ENCODE measurements at regions of chr2 and their contacts with region 1.

Region 1: DNA sequence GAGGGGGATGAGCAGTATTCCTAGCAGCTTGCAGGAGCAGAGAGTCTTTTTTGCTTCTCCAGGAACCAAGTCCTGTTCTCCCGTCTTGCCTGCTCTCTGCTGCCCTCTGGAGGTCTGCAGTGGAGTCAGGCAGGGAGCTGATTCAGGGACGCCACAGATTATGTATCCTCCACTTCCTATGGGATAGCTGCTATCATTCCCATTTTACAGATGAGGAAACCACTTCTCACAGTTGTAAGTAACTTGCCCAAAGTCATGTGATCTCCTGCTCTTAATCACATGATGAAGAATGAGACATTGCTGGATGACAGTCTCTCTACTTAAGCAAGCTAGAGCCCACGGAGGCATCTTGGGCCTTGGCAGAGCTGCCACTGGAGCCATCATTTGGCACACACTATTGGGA is 8.3 kb downstream of the SLC4A5 start:
- DNase-seq: peak; percentile 61 to 80 (median 67)
- H3K4me3 ChIP-seq: no peak overlapping the region
- H3K4me3 Mint-ChIP-seq: no peak overlapping the region
- H3K27ac ChIP-seq: no peak overlapping the region
- H3K27ac Mint-ChIP-seq: no peak overlapping the region
- H3K4me1 ChIP-seq: peaks cover 9% of the 10 kb centered on the region
- H3K4me1 Mint-ChIP-seq: peaks cover 0 to 9% (median 5%) of the 10 kb centered on the region in 3 donors
- H3K27me3 ChIP-seq: no peaks in the 10 kb centered on the region
- H3K27me3 Mint-ChIP-seq: peaks cover 0 to 1% of the 10 kb centered on the region in 2 donors

Region 2: GRCh38 chr2:73828818-73829570 is 505.9 kb before region 1 on chr2 and contains the start of gene STAMBP:
- CTCF ChIA-PET with region 1: interaction called, 39 read pairs
- POLR2A ChIA-PET with region 1: no interaction called
- DNase-seq: peak; percentile 86 to 94 (median 90)
- H3K4me3 ChIP-seq: peak within 1 kb of the TSS; percentile 92
- H3K4me3 Mint-ChIP-seq: peak within 1 kb of the TSS; percentile 82 to 98 (median 96)
- H3K27ac ChIP-seq: peak within 1 kb of the TSS; percentile 93
- H3K27ac Mint-ChIP-seq: peak within 1 kb of the TSS; percentile 94 to 100 (median 99)
- H3K4me1 ChIP-seq: peaks cover 32% of the 10 kb centered on the region
- H3K4me1 Mint-ChIP-seq: peaks cover 46 to 61% (median 52%) of the 10 kb centered on the region in 3 donors
- H3K27me3 ChIP-seq: no peaks in the 10 kb centered on the region
- H3K27me3 Mint-ChIP-seq: no peaks in the 10 kb centered on the region
- total RNA-seq, gene STAMBP: 71.7 to 71.9 TPM

Region 3: DNA sequence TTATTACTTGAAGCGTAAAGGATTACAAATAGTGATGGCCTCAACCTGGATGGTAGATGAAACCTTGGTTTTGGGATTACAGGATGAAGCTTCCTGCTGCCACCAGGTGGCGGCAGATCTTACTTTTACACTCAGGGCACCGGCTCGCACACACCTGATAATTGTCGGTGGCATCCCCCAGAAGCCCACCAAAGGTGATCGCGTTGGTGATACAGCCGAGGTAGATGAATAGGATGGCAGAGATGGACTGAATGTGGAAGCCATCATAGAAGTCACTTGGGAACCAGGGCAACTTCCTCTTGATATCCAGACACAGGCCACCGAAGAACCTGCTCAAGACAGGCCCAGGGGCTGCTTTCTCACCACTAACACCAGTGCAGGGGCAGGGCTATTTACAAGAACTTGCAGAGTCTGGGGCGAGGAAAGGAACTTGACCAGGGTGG is 84.7 kb before region 1 on chr2:
- CTCF ChIA-PET with region 1: interaction called, 82 read pairs
- POLR2A ChIA-PET with region 1: no interaction called
- DNase-seq: peak; percentile 34 to 71 (median 43)
- H3K4me3 ChIP-seq: no peak overlapping the region
- H3K4me3 Mint-ChIP-seq: peak overlapping the region in 2 of 7 donors; percentile 2 to 44
- H3K27ac ChIP-seq: no peak overlapping the region
- H3K27ac Mint-ChIP-seq: peak overlapping the region in 2 of 8 donors; percentile 27 to 84
- H3K4me1 ChIP-seq: no peaks in the 10 kb centered on the region
- H3K4me1 Mint-ChIP-seq: peaks cover 2 to 4% (median 4%) of the 10 kb centered on the region in 3 donors
- H3K27me3 ChIP-seq: no peaks in the 10 kb centered on the region
- H3K27me3 Mint-ChIP-seq: peaks cover 0 to 3% of the 10 kb centered on the region in 2 donors

Region 4: GRCh38 chr2:74267068-74267467 is 67.9 kb before region 1 on chr2:
- CTCF ChIA-PET with region 1: interaction called, 26 read pairs
- POLR2A ChIA-PET with region 1: no interaction called
- DNase-seq: peak in 4 of 5 donors; percentile 26 to 73 (median 54)
- H3K4me3 ChIP-seq: peak overlapping the region; percentile 8
- H3K4me3 Mint-ChIP-seq: peak overlapping the region in 6 of 7 donors; percentile 9 to 65 (median 58)
- H3K27ac ChIP-seq: no peak overlapping the region
- H3K27ac Mint-ChIP-seq: peak overlapping the region in 6 of 8 donors; percentile 6 to 82 (median 30)
- H3K4me1 ChIP-seq: peaks cover 21% of the 10 kb centered on the region
- H3K4me1 Mint-ChIP-seq: peaks cover 15 to 30% (median 19%) of the 10 kb centered on the region in 3 donors
- H3K27me3 ChIP-seq: no peaks in the 10 kb centered on the region
- H3K27me3 Mint-ChIP-seq: no peaks in the 10 kb centered on the region

Region 5: DNA sequence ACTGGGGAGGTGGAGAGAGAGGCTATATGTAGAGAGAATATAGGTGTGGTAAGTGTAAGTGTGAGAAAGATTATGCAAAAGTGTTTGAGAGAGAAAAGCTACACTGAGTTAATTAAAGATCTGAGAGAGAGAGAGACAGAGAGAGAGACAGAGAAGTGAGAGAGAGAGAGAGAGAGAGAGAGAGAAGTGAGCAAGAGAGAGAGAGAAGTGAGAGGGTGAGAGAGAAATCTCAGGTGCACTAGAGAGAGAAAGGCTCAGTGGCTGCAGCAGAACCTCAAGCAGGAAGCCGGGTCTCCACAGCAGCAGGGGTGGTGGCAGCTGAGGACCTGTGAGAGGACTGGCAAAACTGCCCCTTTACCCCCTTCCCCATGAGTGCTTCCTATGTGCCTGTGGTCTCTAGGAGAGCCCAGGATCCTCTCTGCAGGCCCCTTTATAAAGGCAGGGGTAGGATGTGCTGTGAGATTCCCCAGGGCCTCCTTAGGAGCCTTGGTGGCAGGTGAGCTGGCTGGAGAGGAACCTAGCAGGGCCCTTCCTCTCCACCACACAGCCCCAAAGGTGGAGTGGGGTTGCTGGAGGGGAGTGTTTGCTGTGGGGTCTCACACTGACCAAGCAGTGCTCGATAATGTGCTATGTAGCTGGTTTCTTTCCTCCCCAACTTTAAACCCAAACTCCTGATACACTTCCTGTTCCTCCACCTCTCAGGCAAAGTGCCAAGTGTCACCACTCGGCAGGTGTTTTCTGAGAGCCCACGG is 44.3 kb before region 1 on chr2:
- CTCF ChIA-PET with region 1: interaction called, 10 read pairs
- POLR2A ChIA-PET with region 1: no interaction called
- DNase-seq: peak in 4 of 5 donors; percentile 32 to 71 (median 62)
- H3K4me3 ChIP-seq: peak overlapping the region; percentile 36
- H3K4me3 Mint-ChIP-seq: peak overlapping the region; percentile 52 to 84 (median 75)
- H3K27ac ChIP-seq: peak overlapping the region; percentile 17
- H3K27ac Mint-ChIP-seq: peak overlapping the region; percentile 52 to 91 (median 88)
- H3K4me1 ChIP-seq: peaks cover 24% of the 10 kb centered on the region
- H3K4me1 Mint-ChIP-seq: peaks cover 23 to 29% (median 23%) of the 10 kb centered on the region in 3 donors
- H3K27me3 ChIP-seq: no peaks in the 10 kb centered on the region
- H3K27me3 Mint-ChIP-seq: peaks cover 0 to 6% of the 10 kb centered on the region in 2 donors

Region 6: GRCh38 chr2:74439803-74440377 is 105.0 kb after region 1 on chr2:
- CTCF ChIA-PET with region 1: no interaction called
- POLR2A ChIA-PET with region 1: no interaction called
- DNase-seq: no peak
- H3K4me3 ChIP-seq: peak overlapping the region; percentile 22
- H3K4me3 Mint-ChIP-seq: peak overlapping the region in 5 of 7 donors; percentile 19 to 59 (median 29)
- H3K27ac ChIP-seq: peak overlapping the region; percentile 38
- H3K27ac Mint-ChIP-seq: peak overlapping the region in 3 of 8 donors; percentile 58 to 72 (median 60)
- H3K4me1 ChIP-seq: peaks cover 8% of the 10 kb centered on the region
- H3K4me1 Mint-ChIP-seq: peaks cover 6 to 20% (median 8%) of the 10 kb centered on the region in 3 donors
- H3K27me3 ChIP-seq: peaks cover 26% of the 10 kb centered on the region
- H3K27me3 Mint-ChIP-seq: peaks cover 25 to 33% of the 10 kb centered on the region in 2 donors

Region 7: DNA sequence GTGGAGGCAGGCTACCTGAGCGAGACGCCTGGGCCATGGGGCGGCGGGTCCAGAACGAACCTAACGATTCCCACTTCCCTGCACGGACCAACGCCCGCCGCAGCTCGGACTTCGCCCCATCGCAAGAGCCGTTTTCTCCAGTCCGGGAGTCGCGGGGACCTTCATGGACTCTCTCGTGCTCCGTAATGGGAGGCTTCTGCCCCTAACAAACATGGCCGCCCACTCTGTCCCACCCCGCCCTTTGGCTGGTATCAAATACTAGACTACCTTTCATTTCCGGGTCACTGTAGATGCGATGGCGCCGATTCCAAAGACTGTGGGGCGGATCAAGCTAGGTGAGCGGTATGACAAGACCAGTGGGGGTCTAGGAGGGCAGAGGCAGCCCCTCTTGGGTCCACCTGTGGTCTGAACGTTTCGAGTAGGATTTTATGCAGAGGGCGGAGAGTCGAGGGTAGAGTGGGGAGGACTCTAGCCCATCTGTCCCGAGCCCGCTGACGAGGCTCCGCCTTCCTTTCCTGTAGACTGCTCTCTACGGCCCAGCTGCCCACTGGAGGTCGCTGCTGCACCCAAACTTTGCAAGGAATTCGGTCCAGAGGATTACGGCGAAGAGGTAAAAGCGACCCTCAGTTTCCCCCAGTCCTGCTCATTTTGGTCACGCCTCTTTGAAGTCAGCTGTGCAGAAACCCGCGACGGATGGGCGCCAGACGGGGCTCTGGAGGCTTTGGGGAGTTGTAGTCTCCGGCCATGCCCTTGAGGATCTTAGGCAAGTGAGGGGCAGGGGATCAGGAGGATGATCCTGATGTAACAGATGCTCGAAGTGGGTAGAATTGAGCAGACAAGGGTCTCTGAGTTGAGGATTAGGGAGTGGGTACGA is 148.1 kb after region 1 on chr2 and contains the starts of genes CCDC142 and TTC31:
- CTCF ChIA-PET with region 1: no interaction called
- POLR2A ChIA-PET with region 1: no interaction called
- DNase-seq: peak; percentile 87 to 96 (median 93)
- H3K4me3 ChIP-seq: peak within 1 kb of the TSS; percentile 99
- H3K4me3 Mint-ChIP-seq: peak within 1 kb of the TSS; percentile 98 to 100 (median 100)
- H3K27ac ChIP-seq: peak within 1 kb of the TSS; percentile 89
- H3K27ac Mint-ChIP-seq: peak within 1 kb of the TSS; percentile 95 to 100 (median 100)
- H3K4me1 ChIP-seq: peaks cover 25% of the 10 kb centered on the region
- H3K4me1 Mint-ChIP-seq: peaks cover 32 to 56% (median 45%) of the 10 kb centered on the region in 3 donors
- H3K27me3 ChIP-seq: no peaks in the 10 kb centered on the region
- H3K27me3 Mint-ChIP-seq: no peaks in the 10 kb centered on the region
- total RNA-seq, gene CCDC142: 20.3 to 22.8 TPM
- total RNA-seq, gene TTC31: 26.4 to 28.0 TPM

Measured in CD8-positive, alpha-beta memory T cell (primary cell).